H1 (cell line): ENCODE measurements at regions of chr1 and their contacts with region 1.

Region 1: GRCh38 chr1:171984850-171985485 is 143.7 kb downstream of the DNM3 start:
- DNase-seq: no peak
- H3K4me3 ChIP-seq: no peak overlapping the region
- H3K27ac ChIP-seq: no peak overlapping the region
- H3K4me1 ChIP-seq: no peaks in the 10 kb centered on the region
- H3K27me3 ChIP-seq: no peaks in the 10 kb centered on the region
- CTCF ChIP-seq: peak in 2 of 3 experiments; percentile 74 to 78; a peak in 3 of 4 replicates
- EP300 ChIP-seq: no peak
- POLR2A ChIP-seq: no peak
- RAD21 ChIP-seq: peak; percentile 88 to 91

Region 2: DNA sequence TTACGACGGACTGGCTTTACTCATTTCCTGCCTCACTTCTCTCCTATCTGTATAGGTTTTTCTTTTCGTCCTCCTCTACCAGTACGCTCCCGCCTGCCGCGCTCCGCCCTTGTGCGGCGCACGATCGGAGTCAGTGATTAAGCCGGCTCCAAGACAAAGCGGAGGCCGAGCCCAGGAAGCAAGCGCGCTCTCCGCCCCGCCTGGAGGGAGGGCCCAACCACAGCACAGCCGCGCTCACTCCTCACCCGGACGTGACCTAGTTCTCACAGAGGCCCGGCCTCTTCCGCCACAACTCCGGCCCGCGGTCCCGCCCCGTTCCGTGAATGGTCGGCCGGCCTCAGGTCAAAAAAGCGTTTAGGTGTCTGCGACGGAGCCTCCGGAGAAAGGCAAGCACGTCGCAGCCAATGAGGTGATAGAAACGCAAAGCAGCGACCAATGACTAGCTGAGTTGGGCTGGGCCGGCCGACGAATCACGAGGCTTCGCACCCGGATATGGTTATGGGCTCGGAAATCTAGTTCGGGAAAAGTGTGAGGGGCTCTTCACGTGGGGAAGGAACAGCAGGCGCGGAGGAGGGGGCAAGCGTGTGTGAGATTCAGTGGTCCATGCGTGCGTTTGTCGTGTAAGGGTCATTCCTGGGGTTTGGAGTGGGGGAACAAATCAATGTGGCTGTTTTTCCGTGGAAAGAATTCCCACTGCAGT is 203.6 kb before region 1 on chr1 and contains the start of gene METTL13:
- CTCF ChIA-PET with region 1: interaction called, 10 read pairs
- POLR2A ChIA-PET with region 1: no interaction called
- DNase-seq: peak; percentile 94 to 98
- H3K4me3 ChIP-seq: peak within 1 kb of the TSS; percentile 93 to 98 (median 95)
- H3K27ac ChIP-seq: peak within 1 kb of the TSS; percentile 68; the same call in 1 of the 2 replicates
- H3K4me1 ChIP-seq: peaks cover 0 to 4% (median 2%) of the 10 kb centered on the region in 4 experiments; a peak in 4 of 7 replicates
- H3K27me3 ChIP-seq: no peaks in the 10 kb centered on the region
- CTCF ChIP-seq: no peak
- EP300 ChIP-seq: peak in 1 of 2 experiments; percentile 20; a peak in 1 of 3 replicates
- POLR2A ChIP-seq: peak; percentile 73 to 88
- RAD21 ChIP-seq: no peak
- total RNA-seq, gene METTL13: 63.1 and 66.3 TPM in 2 replicates

Region 3: GRCh38 chr1:171817511-171818265 is 167.3 kb before region 1 on chr1:
- CTCF ChIA-PET with region 1: interaction called, 694 read pairs
- POLR2A ChIA-PET with region 1: no interaction called
- DNase-seq: no peak
- H3K4me3 ChIP-seq: peak overlapping the region in 1 of 4 experiments; percentile 13; a peak in 2 of 8 replicates
- H3K27ac ChIP-seq: no peak overlapping the region
- H3K4me1 ChIP-seq: peaks cover 0 to 7% (median 2%) of the 10 kb centered on the region in 4 experiments; a peak in 2 of 7 replicates
- H3K27me3 ChIP-seq: no peaks in the 10 kb centered on the region
- CTCF ChIP-seq: no peak
- EP300 ChIP-seq: no peak
- POLR2A ChIP-seq: no peak
- RAD21 ChIP-seq: no peak

Region 4: GRCh38 chr1:171913385-171913784 is 71.6 kb before region 1 on chr1:
- CTCF ChIA-PET with region 1: interaction called, 15 read pairs
- POLR2A ChIA-PET with region 1: no interaction called
- DNase-seq: no peak
- H3K4me3 ChIP-seq: no peak overlapping the region
- H3K27ac ChIP-seq: no peak overlapping the region
- H3K4me1 ChIP-seq: peaks cover 0 to 8% (median 7%) of the 10 kb centered on the region in 4 experiments; a peak in 3 of 7 replicates
- H3K27me3 ChIP-seq: no peaks in the 10 kb centered on the region
- CTCF ChIP-seq: no peak
- EP300 ChIP-seq: no peak
- POLR2A ChIP-seq: no peak
- RAD21 ChIP-seq: no peak

Region 5: GRCh38 chr1:171965777-171966176 is 19.2 kb before region 1 on chr1:
- CTCF ChIA-PET with region 1: interaction called, 55 read pairs
- POLR2A ChIA-PET with region 1: no interaction called
- DNase-seq: no peak
- H3K4me3 ChIP-seq: no peak overlapping the region
- H3K27ac ChIP-seq: no peak overlapping the region
- H3K4me1 ChIP-seq: peaks cover 2 to 12% (median 7%) of the 10 kb centered on the region in 4 experiments; a peak in 6 of 7 replicates
- H3K27me3 ChIP-seq: no peaks in the 10 kb centered on the region
- CTCF ChIP-seq: no peak
- EP300 ChIP-seq: no peak
- POLR2A ChIP-seq: no peak
- RAD21 ChIP-seq: no peak

Region 6: DNA sequence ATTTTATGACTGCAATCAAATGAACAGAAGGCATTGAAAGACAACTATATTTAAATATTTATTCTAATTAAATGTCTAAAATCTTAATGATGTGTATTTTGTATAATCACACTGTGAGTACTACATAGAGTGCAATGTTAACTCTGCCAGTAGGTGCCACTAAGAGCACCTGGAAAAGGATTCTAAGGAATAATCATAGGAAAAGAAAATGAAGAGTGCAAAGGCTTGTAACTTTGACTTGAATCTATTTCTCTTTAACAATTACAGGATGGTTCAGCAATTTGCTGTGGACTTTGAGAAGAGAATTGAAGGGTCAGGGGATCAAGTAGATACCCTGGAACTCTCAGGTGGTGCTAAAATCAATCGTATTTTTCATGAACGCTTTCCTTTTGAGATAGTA is 56.8 kb after region 1 on chr1:
- CTCF ChIA-PET with region 1: interaction called, 11 read pairs
- POLR2A ChIA-PET with region 1: interaction called, 3 read pairs
- DNase-seq: no peak
- H3K4me3 ChIP-seq: no peak overlapping the region
- H3K27ac ChIP-seq: no peak overlapping the region
- H3K4me1 ChIP-seq: no peaks in the 10 kb centered on the region
- H3K27me3 ChIP-seq: no peaks in the 10 kb centered on the region
- CTCF ChIP-seq: peak in 2 of 3 experiments; percentile 12 to 30; a peak in 2 of 4 replicates
- EP300 ChIP-seq: no peak
- POLR2A ChIP-seq: no peak
- RAD21 ChIP-seq: peak; percentile 56 to 59